Endothelial cell of umbilical vein (primary cell): ENCODE measurements at regions of chr3 and their contacts with region 1.

Region 1: DNA sequence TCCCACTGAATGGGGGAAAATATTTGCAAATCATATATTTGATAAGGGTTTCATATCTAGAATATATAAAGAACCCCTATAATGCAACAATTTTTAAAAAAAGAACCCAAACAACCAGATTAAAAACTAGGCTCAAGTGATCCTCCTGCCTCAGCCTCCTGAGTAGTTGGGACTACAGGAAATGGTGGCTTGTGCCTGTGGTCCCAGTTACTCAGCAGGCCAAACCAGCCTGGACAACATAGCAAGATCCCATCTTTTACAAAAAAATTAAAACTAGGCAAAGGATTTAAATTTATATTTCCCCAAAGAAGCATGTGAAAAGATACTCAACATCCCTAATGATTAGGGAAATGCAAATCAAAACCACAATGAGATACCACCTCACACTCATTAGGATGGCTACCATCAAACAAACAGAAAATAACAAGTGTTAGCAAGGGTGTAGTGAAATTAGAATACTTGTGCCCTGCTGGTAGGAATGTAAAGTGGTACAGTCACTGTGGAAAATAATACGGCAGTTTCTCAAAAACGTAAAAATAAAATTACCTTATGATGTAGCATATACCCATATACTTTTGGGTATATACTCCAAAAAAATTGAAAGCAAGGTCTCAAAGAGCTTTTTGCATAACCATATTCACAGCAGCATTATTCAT is 19.7 kb downstream of the TFDP2 start:
- DNase-seq: no peak
- H3K4me3 ChIP-seq: no peak overlapping the region
- H3K27ac ChIP-seq: no peak overlapping the region
- H3K4me1 ChIP-seq: no peaks in the 10 kb centered on the region
- H3K27me3 ChIP-seq: no peaks in the 10 kb centered on the region
- CTCF ChIP-seq: no peak
- POLR2A ChIP-seq: no peak

Region 2: GRCh38 chr3:142056656-142057330 is 72.9 kb before region 1 on chr3:
- CTCF ChIA-PET with region 1: no interaction called
- POLR2A ChIA-PET with region 1: no interaction called
- dilution Hi-C with region 1: no loop called
- intact Hi-C with region 1: no loop called
- DNase-seq: no peak
- H3K4me3 ChIP-seq: no peak overlapping the region
- H3K27ac ChIP-seq: no peak overlapping the region
- H3K4me1 ChIP-seq: peaks cover 8% of the 10 kb centered on the region
- H3K27me3 ChIP-seq: no peaks in the 10 kb centered on the region
- CTCF ChIP-seq: no peak
- POLR2A ChIP-seq: no peak

Region 3: DNA sequence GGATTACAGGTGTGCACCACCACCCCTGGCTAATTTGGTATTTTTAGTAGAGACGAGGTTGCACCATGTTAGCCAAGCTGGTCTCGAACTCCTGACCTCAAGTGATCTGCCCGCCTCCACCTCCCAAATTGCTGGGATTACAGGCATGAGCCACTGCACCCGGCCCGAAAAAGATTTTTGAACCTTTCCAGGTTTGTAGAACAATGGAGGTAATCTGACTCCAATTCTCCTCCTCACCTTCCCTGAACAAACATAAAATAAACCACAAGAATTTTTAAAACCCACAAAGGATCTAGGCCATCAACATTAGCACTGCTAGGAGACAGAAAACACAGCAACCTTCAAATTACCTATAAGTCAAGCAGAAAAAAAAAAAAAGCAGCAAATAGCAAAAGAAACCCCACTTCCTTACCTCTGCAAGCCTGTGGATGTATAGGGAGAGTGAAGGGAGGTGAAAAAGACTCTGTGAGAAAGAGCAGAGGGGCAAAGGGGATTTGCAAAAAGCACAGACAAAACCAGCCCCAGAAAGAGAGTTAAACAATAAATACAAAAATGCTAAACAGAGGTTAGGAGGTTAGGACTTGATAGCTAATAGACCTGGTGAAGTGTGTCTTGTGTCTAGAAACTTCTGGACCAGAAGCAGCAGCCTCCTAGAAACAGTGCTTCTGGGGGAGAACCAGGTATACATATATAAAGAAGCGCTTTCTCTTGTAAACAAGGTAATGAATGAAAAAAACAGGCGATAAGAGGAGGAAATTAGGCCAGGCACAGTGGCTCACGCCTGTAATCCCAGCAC is 12.4 kb before region 1 on chr3:
- CTCF ChIA-PET with region 1: interaction called, 17 read pairs
- POLR2A ChIA-PET with region 1: no interaction called
- dilution Hi-C with region 1: no loop called
- intact Hi-C with region 1: no loop called
- DNase-seq: no peak
- H3K4me3 ChIP-seq: no peak overlapping the region
- H3K27ac ChIP-seq: no peak overlapping the region
- H3K4me1 ChIP-seq: no peaks in the 10 kb centered on the region
- H3K27me3 ChIP-seq: no peaks in the 10 kb centered on the region
- CTCF ChIP-seq: no peak
- POLR2A ChIP-seq: no peak

Region 4: DNA sequence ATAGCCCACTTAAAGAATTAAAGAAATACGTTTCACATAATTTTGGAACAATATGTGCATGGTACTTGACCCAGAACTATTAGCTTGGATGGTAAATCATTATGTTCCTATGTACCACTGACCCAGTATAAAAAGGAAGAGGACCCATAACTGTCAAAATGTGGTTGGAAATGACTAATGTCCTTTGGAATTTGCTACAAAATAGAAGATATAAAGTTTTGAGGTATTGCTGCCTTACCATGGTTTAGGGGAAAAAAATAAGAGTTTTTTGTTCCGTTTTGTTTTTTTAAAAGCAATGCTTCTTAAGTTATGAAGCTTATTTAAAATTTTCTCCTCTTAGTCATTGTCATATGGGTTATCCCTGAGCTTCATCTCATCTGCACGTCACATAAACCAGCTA is 35.5 kb after region 1 on chr3:
- CTCF ChIA-PET with region 1: interaction called, 13 read pairs
- POLR2A ChIA-PET with region 1: no interaction called
- dilution Hi-C with region 1: no loop called
- intact Hi-C with region 1: no loop called
- DNase-seq: no peak
- H3K4me3 ChIP-seq: no peak overlapping the region
- H3K27ac ChIP-seq: no peak overlapping the region
- H3K4me1 ChIP-seq: peaks cover 5% of the 10 kb centered on the region
- H3K27me3 ChIP-seq: no peaks in the 10 kb centered on the region
- CTCF ChIP-seq: no peak
- POLR2A ChIP-seq: no peak

Region 5: GRCh38 chr3:142211035-142211434 is 81.4 kb after region 1 on chr3:
- CTCF ChIA-PET with region 1: interaction called, 30 read pairs
- POLR2A ChIA-PET with region 1: no interaction called
- dilution Hi-C with region 1: no loop called
- intact Hi-C with region 1: loop called (anchors 2 kb)
- DNase-seq: peak; percentile 26
- H3K4me3 ChIP-seq: no peak overlapping the region
- H3K27ac ChIP-seq: no peak overlapping the region
- H3K4me1 ChIP-seq: peaks cover 9% of the 10 kb centered on the region
- H3K27me3 ChIP-seq: no peaks in the 10 kb centered on the region
- CTCF ChIP-seq: peak in 1 of 2 donors; percentile 31
- POLR2A ChIP-seq: no peak

Region 6: GRCh38 chr3:142884531-142884930 is 754.9 kb after region 1 on chr3:
- CTCF ChIA-PET with region 1: no interaction called
- POLR2A ChIA-PET with region 1: no interaction called
- dilution Hi-C with region 1: no loop called
- intact Hi-C with region 1: no loop called
- DNase-seq: no peak
- H3K4me3 ChIP-seq: no peak overlapping the region
- H3K27ac ChIP-seq: no peak overlapping the region
- H3K4me1 ChIP-seq: peaks cover 8% of the 10 kb centered on the region
- H3K27me3 ChIP-seq: peaks cover 27 to 34% of the 10 kb centered on the region in 2 experiments
- CTCF ChIP-seq: no peak
- POLR2A ChIP-seq: no peak

Region 7: GRCh38 chr3:142993958-142994442 is 864.4 kb after region 1 on chr3:
- CTCF ChIA-PET with region 1: interaction called, 5 read pairs
- POLR2A ChIA-PET with region 1: no interaction called
- dilution Hi-C with region 1: no loop called
- intact Hi-C with region 1: loop called (anchors 5 kb)
- DNase-seq: peak; percentile 61
- H3K4me3 ChIP-seq: no peak overlapping the region
- H3K27ac ChIP-seq: no peak overlapping the region
- H3K4me1 ChIP-seq: no peaks in the 10 kb centered on the region
- H3K27me3 ChIP-seq: peaks cover 6 to 12% of the 10 kb centered on the region in 2 experiments
- CTCF ChIP-seq: peak; percentile 54 to 56
- POLR2A ChIP-seq: no peak